ENCODE measurements at regions of chr2 and their contacts with region 1.

Region 1: GRCh38 chr2:68434981-68435380 is 32.1 kb downstream of the FBXO48 start:
- DNase-seq: no peak
- H3K4me3 ChIP-seq: no peak overlapping the region
- H3K27ac ChIP-seq: peak overlapping the region; percentile 41 to 77
- H3K4me1 ChIP-seq: peaks cover 21% of the 10 kb centered on the region
- H3K27me3 ChIP-seq: no peaks in the 10 kb centered on the region
- CTCF ChIP-seq: no peak
- POLR2A ChIP-seq: no peak

Region 2: DNA sequence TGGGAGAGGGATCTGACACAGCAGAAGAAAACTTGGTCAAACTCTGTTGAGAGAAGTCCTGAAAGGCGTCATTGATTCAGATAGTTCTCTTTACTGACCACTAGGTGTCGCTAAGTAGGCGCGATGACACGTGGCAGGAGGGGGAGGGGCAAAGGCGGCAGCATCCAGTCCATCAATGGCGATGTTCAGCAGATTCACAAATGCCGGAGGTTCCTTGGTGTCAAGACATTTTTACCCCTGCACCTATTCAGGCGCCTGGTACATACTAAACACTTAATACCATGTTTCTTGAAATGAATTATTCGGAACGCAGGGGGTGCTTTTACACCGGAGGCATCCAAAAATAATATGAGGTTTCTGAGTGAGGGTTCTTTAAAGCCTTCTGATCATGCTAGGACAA is 72.9 kb before region 1 on chr2:
- intact Hi-C with region 1: loop called (anchors 10 kb)
- DNase-seq: peak; percentile 86
- H3K4me3 ChIP-seq: no peak overlapping the region
- H3K27ac ChIP-seq: no peak overlapping the region
- H3K4me1 ChIP-seq: peaks cover 3% of the 10 kb centered on the region
- H3K27me3 ChIP-seq: no peaks in the 10 kb centered on the region
- CTCF ChIP-seq: peak; percentile 82 to 90 (median 88)
- POLR2A ChIP-seq: no peak

Measured in testis (tissue), 5 donors.